Right ventricle myocardium inferior (tissue), 1 donor: ENCODE measurements at regions of chr19 and their contacts with region 1.

Region 1: DNA sequence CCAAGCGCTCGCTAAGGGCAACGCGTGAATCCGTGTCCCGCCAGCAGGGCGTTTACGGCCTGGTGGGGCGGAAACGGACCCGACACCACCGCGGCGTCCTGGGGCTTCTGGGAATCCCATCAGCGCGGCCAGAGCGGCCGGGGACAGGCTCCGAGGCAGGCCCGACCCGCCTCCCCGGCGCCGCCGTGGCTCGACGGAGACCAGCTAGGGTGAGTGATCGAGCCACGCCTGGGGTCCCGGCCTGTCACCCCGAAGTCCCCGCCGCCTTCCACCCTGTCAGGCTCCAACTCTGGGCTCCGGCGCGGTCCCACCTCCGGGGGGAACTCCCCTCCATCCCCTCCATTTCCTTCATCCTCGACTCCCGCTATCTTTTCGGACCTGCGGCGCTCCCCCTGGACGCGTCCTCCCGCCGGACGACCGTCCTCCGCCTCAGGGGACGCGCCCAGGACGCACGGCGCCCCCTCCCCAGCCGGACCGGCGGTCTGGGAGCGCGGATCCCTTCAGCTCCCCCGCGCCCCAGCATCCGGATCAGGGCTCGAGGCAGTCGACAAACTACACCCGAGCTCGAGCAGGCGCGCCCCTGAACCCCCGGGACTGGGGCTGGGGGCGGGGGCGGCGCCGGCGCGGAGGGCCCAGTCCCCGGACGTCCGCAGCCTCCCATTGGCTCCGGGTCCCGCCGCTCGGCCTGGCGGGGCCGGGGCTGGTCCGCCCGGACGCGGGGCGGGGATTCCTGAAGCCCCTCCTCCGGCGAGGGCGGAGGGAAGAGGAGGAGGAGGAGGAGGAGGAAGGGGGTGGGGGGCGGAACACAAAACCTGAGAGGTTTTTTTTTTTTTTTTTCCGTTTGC is 638 bp upstream of the BICRA start:
- DNase-seq: peak; percentile 96
- ATAC-seq: peak; percentile 96

Region 2: GRCh38 chr19:47573071-47574026 is 34.9 kb before region 1 on chr19 and contains the start of gene ZNF541:
- intact Hi-C with region 1: no loop called
- DNase-seq: peak; percentile 88
- ATAC-seq: peak; percentile 73
- total RNA-seq, gene ZNF541: 1.2 TPM

Region 3: DNA sequence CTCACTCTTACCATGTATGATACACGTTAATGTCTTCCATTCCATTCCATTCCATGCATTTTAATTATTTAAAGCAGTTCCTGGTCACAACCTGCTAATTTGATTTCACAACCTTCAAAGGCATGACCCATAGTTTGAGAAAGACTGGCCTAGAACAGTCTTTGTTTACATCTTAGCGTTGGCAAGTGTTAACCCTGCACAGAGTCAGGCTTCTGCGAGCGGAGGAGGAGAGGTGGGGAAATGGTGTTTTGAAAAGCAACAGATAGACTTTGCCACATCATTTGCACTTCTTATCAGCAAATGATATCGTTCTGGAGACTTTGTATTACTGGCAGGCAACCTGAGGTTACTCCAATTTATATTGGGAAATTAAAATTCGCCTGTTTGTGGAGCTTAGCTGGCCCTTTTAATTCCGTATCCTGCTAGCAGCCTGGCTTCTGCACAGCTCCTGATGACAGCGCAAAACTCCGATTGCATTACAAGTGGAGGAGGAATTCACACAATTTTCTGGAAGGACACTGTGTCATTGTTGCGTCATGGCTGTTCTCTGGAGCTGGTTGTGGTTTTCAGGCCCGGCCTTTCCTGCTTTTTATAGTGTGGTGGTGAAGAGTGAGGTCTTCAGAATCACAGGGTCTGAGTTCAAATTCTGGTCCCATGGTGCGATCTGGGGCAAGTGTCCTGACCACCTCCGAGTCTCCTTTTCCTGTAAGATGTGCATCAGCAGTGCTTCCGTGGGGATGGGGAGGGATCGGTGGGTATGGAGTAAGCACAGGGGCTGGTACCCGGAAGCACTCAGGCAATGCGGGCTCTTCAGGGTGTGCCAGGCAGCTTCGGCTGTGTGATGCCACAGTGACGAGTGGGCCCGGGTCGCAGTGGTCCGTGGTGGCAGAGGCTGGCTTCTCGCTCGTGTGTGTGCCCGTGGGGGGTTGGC is 55.8 kb after region 1 on chr19:
- intact Hi-C with region 1: loop called (anchors 2 kb)
- DNase-seq: peak; percentile 84
- ATAC-seq: peak; percentile 81

Region 4: DNA sequence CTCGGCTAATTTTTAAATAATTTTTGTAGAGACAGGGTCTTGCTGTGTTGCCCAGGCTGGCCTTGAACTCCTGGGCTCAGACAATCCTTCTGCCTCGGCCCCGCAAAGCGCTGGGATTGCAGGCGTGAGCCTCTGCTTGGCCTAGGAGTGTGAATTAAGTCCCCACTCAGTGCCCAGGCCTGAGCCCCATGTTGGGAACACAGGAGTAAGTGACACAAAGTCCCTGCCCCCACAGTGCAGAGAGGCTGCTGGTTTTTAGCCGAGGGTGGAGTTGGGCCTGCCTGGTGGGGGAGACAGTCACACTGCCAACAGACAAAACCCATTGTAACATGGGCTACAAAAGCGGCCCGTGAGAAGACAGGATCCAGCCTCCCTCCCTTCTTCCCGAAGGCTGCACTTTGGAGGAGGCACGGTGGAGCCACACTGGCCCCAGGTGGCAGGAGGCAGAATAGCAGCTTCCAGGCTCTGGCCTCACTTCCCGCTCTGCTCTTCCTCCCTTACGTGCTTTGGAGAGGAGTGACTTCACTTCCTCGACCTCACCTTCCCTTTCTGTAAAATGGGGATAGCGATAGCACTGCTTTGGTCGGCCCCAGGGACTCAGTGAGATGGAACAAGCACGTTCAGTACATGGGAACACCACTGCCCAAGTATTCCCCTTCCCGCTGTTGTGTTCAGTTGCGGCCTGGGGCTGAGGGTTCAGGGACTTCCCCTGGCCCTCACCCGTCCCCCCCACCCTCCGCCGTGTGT is 89.7 kb after region 1 on chr19:
- intact Hi-C with region 1: loop called (anchors 5 kb)
- DNase-seq: peak; percentile 85
- ATAC-seq: peak; percentile 89